Naive thymus-derived CD4-positive, alpha-beta T cell (primary cell): ENCODE measurements at regions of chr9 and their contacts with region 1.

Region 1: GRCh38 chr9:95510709-95511615 is 5.8 kb downstream of the PTCH1 start:
- DNase-seq: peak; percentile 64 to 87 (median 80)
- ATAC-seq: peak; percentile 75
- H3K4me3 ChIP-seq: peak overlapping the region; percentile 66
- H3K4me3 Mint-ChIP-seq: peak overlapping the region; percentile 90 to 100 (median 96)
- H3K27ac ChIP-seq: peak overlapping the region; percentile 58
- H3K27ac Mint-ChIP-seq: peak overlapping the region; percentile 82 to 94 (median 85)
- H3K4me1 ChIP-seq: peaks cover 14 to 18% of the 10 kb centered on the region in 2 donors
- H3K4me1 Mint-ChIP-seq: peaks cover 26 to 45% (median 39%) of the 10 kb centered on the region in 7 donors
- H3K27me3 ChIP-seq: no peaks in the 10 kb centered on the region
- H3K27me3 Mint-ChIP-seq: peaks cover 0 to 79% (median 3%) of the 10 kb centered on the region in 5 donors

Region 2: DNA sequence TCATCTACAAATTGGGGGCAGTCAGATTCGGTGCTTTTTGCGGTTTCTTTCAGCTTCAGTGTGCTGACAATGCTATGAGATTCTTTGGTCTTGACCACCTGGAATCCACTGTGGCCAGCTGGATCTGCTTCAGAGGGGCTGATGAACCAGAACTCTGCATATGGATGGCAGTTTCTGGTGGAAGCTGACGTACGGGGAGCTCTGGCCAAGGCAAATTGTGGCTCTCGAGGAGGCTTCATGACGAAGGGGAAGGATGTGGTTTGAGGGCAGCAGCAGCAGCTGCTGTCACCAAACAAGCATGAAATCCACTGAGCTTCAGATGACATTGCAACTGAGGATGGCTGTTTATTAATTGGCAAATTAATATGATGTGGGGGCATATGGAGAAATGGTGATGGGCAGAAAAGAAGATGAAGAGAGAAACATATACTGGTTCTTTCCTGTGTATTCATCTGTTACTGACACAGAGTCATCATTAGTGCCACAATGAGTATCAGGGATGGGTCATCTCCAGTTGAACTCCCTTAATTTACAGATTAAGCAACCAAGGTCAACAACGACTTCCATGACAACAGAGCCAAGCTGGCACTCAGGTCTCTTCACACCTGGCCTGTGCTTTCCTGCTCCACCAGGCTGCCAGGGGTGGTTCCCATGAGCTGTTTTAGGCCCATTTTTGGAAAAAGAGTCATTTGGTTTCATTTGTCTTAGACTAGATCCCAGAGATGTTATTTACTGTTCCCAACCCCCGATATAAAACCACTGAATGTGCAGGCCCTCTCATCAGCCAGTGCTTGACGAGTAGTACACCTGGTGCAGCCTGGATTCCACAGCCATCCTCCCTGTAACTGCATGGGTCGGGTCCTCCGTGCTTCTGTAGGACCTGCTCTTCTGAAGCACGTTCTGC is 649.7 kb before region 1 on chr9:
- CTCF ChIA-PET with region 1: no interaction called
- POLR2A ChIA-PET with region 1: no interaction called
- intact Hi-C with region 1: loop called in 1 of 2 experiments (anchors 5 kb)
- DNase-seq: peak; percentile 31 to 86 (median 78)
- ATAC-seq: peak; percentile 93
- H3K4me3 ChIP-seq: peak overlapping the region; percentile 40
- H3K4me3 Mint-ChIP-seq: peak overlapping the region; percentile 73 to 85 (median 82)
- H3K27ac ChIP-seq: no peak overlapping the region
- H3K27ac Mint-ChIP-seq: peak overlapping the region; percentile 25 to 96 (median 92)
- H3K4me1 ChIP-seq: peaks cover 25 to 26% of the 10 kb centered on the region in 2 donors
- H3K4me1 Mint-ChIP-seq: peaks cover 26 to 55% (median 47%) of the 10 kb centered on the region in 7 donors
- H3K27me3 ChIP-seq: no peaks in the 10 kb centered on the region
- H3K27me3 Mint-ChIP-seq: no peaks in the 10 kb centered on the region

Region 3: DNA sequence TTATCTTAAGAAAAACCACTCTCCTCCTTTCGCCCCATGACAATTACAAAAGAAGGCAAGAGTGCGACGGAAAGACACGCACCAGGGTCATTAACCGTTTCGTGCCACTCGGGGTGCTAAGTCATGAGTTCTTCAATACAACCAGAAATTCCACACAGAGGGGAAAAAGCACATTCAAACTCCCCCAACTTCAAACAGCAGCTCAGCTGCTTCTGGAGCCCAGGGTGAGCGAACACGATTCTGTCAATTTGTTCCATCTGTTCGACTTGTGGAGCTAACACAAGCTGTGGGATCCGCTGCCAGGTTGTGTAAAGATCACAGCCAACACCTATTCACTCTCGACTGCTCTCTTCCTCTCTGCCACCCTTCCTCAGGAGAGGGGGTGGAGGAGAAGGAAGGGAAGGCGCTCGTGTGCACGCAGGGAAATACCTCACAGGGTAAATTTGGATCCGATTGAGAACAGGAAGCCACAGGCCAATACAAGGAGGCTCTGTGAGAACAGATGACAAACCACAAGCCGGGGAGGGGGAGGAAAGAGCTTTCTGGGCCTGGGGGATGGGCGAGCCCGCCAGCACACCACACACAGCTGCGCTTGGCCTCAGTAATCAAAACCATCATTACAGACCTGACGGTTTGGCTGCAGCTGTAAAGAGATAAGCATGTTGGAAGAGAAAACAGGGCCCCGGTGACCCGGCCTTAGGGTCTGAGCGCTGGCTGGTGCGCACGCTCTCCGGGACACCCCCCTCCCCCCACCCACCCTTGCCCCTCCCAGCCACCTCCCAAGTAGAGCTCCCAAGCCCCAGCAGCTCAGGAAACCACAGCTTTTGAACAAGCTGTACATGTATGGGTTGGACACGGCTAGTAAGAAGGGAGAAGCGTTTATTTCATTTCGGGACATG is 48.5 kb before region 1 on chr9:
- CTCF ChIA-PET with region 1: no interaction called
- POLR2A ChIA-PET with region 1: interaction called, 3 read pairs
- intact Hi-C with region 1: loop called (anchors 1 kb)
- DNase-seq: peak; percentile 47 to 91 (median 86)
- ATAC-seq: peak; percentile 98
- H3K4me3 ChIP-seq: peak overlapping the region; percentile 45
- H3K4me3 Mint-ChIP-seq: peak overlapping the region; percentile 80 to 91 (median 85)
- H3K27ac ChIP-seq: no peak overlapping the region
- H3K27ac Mint-ChIP-seq: peak overlapping the region; percentile 25 to 92 (median 76)
- H3K4me1 ChIP-seq: peaks cover 24 to 26% of the 10 kb centered on the region in 2 donors
- H3K4me1 Mint-ChIP-seq: peaks cover 22 to 53% (median 44%) of the 10 kb centered on the region in 7 donors
- H3K27me3 ChIP-seq: no peaks in the 10 kb centered on the region
- H3K27me3 Mint-ChIP-seq: peaks cover 0 to 59% (median 0%) of the 10 kb centered on the region in 5 donors

Region 4: GRCh38 chr9:95726756-95727155 is 215.8 kb after region 1 on chr9:
- CTCF ChIA-PET with region 1: no interaction called
- POLR2A ChIA-PET with region 1: no interaction called
- intact Hi-C with region 1: loop called (anchors 1 to 2 kb)
- DNase-seq: peak in 1 of 9 donors; percentile 31
- ATAC-seq: no peak
- H3K4me3 ChIP-seq: no peak overlapping the region
- H3K4me3 Mint-ChIP-seq: peak overlapping the region in 1 of 10 donors; percentile 20
- H3K27ac ChIP-seq: no peak overlapping the region
- H3K27ac Mint-ChIP-seq: no peak overlapping the region
- H3K4me1 ChIP-seq: peaks cover 18 to 24% of the 10 kb centered on the region in 2 donors
- H3K4me1 Mint-ChIP-seq: peaks cover 33 to 58% (median 49%) of the 10 kb centered on the region in 7 donors
- H3K27me3 ChIP-seq: no peaks in the 10 kb centered on the region
- H3K27me3 Mint-ChIP-seq: peaks cover 0 to 31% (median 0%) of the 10 kb centered on the region in 5 donors

Region 5: DNA sequence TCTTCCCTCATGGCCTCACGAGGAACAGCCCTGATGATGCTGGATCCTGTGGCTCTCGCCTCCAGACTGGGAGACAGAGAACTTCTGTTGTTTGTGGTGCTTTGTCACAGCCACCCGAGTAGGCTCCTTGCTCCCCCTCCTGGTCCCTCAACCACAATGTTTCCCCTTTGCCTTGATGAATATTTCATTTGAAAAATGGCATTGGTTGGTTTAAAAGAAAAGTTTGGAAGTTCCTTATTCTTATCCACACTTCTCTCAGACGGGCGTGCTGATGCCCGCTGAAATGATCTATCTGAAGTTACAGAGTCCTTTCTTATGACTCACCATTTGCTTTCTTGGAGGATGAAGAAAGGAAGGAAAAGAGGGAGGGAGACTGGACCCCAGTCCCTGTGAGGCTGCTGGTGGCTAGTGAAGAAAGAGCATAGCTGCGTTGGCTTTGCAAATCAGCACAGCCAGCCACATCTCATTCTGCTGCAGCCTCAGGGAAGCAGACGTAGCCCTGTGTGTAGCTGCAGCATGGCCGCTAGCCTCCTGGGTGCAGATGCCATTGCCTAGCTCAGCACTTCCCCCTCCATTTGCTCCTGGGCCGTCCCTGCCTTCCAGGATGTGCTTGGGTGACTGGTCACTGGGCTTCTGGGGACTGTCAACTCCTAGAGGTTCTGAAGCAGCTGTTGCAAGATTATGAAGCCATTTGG is 550.5 kb after region 1 on chr9:
- CTCF ChIA-PET with region 1: no interaction called
- POLR2A ChIA-PET with region 1: no interaction called
- intact Hi-C with region 1: loop called in 1 of 2 experiments (anchors 5 kb)
- DNase-seq: peak in 8 of 9 donors; percentile 23 to 66 (median 50)
- ATAC-seq: peak; percentile 69
- H3K4me3 ChIP-seq: no peak overlapping the region
- H3K4me3 Mint-ChIP-seq: no peak overlapping the region
- H3K27ac ChIP-seq: no peak overlapping the region
- H3K27ac Mint-ChIP-seq: peak overlapping the region in 2 of 9 donors; percentile 63 to 73
- H3K4me1 ChIP-seq: no peaks in the 10 kb centered on the region
- H3K4me1 Mint-ChIP-seq: peaks cover 0 to 22% (median 6%) of the 10 kb centered on the region in 7 donors
- H3K27me3 ChIP-seq: no peaks in the 10 kb centered on the region
- H3K27me3 Mint-ChIP-seq: no peaks in the 10 kb centered on the region

Region 6: DNA sequence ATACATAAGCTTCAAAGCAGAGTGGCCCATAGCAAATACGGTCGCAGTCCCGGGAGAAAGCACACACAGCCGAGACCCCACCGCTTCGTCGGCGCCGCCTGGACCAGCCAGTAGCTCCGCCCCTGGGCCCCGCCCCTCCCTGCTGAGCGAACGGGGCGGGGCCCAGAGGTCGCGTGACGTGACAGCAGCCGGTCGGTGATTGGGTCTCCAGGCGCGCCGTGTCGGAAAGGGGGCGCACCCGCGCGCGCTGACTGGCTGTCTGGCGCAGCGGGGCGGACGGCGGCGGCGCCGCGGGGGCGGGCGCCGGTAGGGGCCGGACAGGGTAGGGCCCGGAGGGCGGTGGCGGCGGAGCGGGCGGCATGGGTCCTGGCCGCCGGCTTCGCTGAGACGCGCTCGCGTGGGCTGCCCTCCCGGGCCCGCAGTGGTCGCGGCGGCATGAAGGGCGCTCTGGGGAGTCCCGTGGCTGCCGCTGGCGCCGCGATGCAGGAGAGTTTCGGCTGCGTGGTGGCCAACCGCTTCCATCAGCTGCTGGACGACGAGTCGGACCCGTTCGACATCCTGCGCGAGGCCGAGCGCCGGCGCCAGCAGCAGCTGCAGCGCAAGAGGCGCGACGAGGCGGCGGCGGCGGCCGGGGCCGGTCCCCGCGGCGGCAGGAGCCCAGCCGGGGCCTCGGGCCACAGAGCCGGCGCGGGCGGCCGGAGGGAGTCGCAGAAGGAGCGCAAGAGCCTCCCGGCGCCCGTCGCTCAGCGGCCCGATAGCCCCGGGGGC is 939.1 kb after region 1 on chr9 and contains the start of gene HABP4:
- CTCF ChIA-PET with region 1: no interaction called
- POLR2A ChIA-PET with region 1: no interaction called
- intact Hi-C with region 1: loop called in 1 of 2 experiments (anchors 10 kb)
- DNase-seq: peak; percentile 90 to 97 (median 95)
- ATAC-seq: peak; percentile 98
- H3K4me3 ChIP-seq: peak within 1 kb of the TSS; percentile 77
- H3K4me3 Mint-ChIP-seq: peak within 1 kb of the TSS; percentile 88 to 99 (median 93)
- H3K27ac ChIP-seq: peak within 1 kb of the TSS; percentile 74
- H3K27ac Mint-ChIP-seq: peak within 1 kb of the TSS; percentile 74 to 98 (median 94)
- H3K4me1 ChIP-seq: peaks cover 5 to 14% of the 10 kb centered on the region in 2 donors
- H3K4me1 Mint-ChIP-seq: peaks cover 19 to 33% (median 26%) of the 10 kb centered on the region in 7 donors
- H3K27me3 ChIP-seq: no peaks in the 10 kb centered on the region
- H3K27me3 Mint-ChIP-seq: peaks cover 0 to 41% (median 6%) of the 10 kb centered on the region in 5 donors
- total RNA-seq, gene HABP4: 6.6 to 40.3 (median 23.9) TPM